Right lobe of liver (tissue), 6 donors: ENCODE measurements at regions of chr11 and their contacts with region 1.

Region 1: GRCh38 chr11:8033305-8034105 is 46.4 kb downstream of the EIF3F start:
- DNase-seq: peak; percentile 75 to 82 (median 80)
- ATAC-seq: peak; percentile 88 to 96 (median 94)
- H3K4me3 ChIP-seq: no peak overlapping the region
- H3K27ac ChIP-seq: no peak overlapping the region
- H3K4me1 ChIP-seq: no peaks in the 10 kb centered on the region
- H3K27me3 ChIP-seq: no peaks in the 10 kb centered on the region
- CTCF ChIP-seq: peak; percentile 82 to 95 (median 92)
- POLR2A ChIP-seq: no peak

Region 2: GRCh38 chr11:7936615-7937014 is 96.9 kb before region 1 on chr11:
- intact Hi-C with region 1: no loop called
- DNase-seq: no peak
- ATAC-seq: no peak
- H3K4me3 ChIP-seq: no peak overlapping the region
- H3K27ac ChIP-seq: no peak overlapping the region
- H3K4me1 ChIP-seq: no peaks in the 10 kb centered on the region
- H3K27me3 ChIP-seq: no peaks in the 10 kb centered on the region
- CTCF ChIP-seq: no peak
- POLR2A ChIP-seq: no peak

Region 3: DNA sequence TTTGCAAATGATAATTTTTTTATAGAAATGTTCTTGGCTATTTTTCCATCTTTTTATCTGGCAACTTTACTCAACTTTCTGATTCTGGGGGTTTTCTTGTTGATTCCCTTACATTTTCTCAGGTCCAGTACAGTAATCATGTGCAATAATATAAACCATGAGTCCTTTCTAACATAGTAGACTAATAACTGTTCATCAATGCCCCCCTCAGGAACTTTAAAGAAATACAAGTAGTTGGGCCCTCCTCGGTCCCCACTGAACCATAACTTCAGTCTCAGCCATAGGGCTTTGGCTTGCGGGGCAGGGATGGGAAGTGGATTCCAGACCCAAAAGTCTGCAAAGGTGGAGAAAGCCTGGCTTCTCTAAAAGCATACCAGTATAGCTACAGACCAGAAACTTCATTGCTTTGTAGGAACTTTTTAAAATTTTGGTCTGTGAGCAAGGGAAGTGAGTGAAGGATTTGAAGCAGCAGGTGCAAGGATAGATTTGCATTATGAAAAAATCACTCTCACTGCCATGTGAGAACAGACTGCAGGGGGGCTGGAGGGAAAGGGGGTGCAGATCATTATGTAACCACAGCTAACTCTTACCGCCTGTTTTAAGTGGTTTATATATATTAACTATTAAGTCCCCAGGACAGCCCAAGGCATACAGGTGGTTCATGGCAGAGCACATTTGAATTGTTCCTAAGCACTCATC is 37.1 kb after region 1 on chr11:
- intact Hi-C with region 1: loop called in 1 of 2 experiments (anchors 5 kb)
- DNase-seq: peak in 1 of 3 donors; percentile 23
- ATAC-seq: peak; percentile 22 to 56 (median 47)
- H3K4me3 ChIP-seq: no peak overlapping the region
- H3K27ac ChIP-seq: no peak overlapping the region
- H3K4me1 ChIP-seq: peaks cover 0 to 22% (median 9%) of the 10 kb centered on the region in 4 donors
- H3K27me3 ChIP-seq: no peaks in the 10 kb centered on the region
- CTCF ChIP-seq: peak; percentile 45 to 51 (median 47)
- POLR2A ChIP-seq: no peak

Region 4: GRCh38 chr11:8099291-8099899 is 65.9 kb after region 1 on chr11:
- intact Hi-C with region 1: loop called in 1 of 2 experiments (anchors 5 kb)
- DNase-seq: peak in 2 of 3 donors; percentile 66 to 77
- ATAC-seq: peak; percentile 80 to 94 (median 86)
- H3K4me3 ChIP-seq: no peak overlapping the region
- H3K27ac ChIP-seq: no peak overlapping the region
- H3K4me1 ChIP-seq: no peaks in the 10 kb centered on the region
- H3K27me3 ChIP-seq: no peaks in the 10 kb centered on the region
- CTCF ChIP-seq: peak; percentile 85 to 94 (median 85)
- POLR2A ChIP-seq: no peak